ENCODE measurements at regions of chr1 and their contacts with region 1.

Region 1: DNA sequence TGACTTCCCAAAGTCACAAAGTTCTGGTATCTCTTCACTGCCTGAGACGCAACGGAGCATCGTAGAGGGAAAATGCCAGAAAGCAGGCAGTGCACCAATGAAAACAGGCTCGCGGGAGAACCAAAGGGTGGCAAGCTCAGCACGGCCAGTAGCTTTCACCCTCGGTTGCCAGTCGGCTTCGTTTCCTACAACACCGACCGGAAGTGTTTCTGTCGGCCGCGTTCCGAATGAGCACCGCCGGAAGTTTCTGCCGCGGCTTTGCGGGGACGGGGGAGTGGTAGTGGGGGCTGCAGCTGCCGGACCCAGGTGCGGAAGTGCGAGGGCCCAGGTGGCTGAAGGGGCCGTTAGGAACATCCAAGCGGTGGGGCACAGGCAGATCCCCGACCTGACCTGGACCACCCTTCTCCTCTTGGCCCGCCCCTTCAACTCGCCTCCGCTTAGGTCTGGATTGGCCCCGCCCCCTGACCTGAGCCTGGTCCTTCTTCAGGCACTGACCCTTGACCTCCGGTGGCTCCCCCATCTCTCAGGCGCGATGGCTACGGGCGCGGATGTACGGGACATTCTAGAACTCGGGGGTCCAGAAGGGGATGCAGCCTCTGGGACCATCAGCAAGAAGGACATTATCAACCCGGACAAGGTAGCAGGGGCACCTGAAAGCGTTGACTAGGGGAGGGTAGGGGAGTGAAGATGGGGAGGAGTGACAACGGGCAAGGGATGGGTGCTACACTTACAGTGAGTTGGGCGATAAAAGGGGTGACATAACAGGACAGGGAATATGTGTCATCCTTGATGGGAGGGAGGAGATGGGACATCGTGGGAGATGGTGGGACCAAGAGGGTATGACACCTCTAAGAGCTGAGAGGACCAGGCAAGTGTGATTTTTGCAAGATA is at the start of gene DMAP1:
- DNase-seq: peak; percentile 37
- H3K4me3 ChIP-seq: peak within 1 kb of the TSS; percentile 98
- CTCF ChIP-seq: no peak

Region 2: GRCh38 chr1:44002606-44003157 is 210.8 kb before region 1 on chr1:
- CTCF ChIA-PET with region 1: interaction called, 29 read pairs
- POLR2A ChIA-PET with region 1: no interaction called
- DNase-seq: no peak
- H3K4me3 ChIP-seq: no peak overlapping the region
- CTCF ChIP-seq: no peak

Region 3: DNA sequence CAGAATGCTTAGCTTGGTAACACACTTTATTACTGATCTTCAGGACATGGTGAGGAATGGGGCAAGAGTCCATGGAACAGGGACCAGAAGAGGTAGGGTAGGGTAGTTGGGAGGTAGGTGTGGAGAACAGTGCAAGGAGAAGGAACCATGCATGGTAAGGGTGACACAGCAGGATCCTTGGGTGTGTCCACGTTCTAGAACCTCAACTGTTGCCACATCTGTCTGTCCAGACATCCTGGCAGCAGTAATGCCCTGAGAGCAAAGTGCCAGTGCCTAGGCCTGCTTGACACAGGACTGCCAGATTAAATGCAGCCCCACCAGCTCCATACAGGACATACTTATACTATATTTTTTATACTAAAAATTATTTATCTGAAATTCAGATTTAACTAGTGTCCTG is 13.7 kb after region 1 on chr1:
- CTCF ChIA-PET with region 1: interaction called, 167 read pairs
- POLR2A ChIA-PET with region 1: no interaction called
- DNase-seq: no peak
- H3K4me3 ChIP-seq: no peak overlapping the region
- CTCF ChIP-seq: no peak

Region 4: GRCh38 chr1:44270686-44271628 is 57.5 kb after region 1 on chr1:
- CTCF ChIA-PET with region 1: interaction called, 16 read pairs
- POLR2A ChIA-PET with region 1: no interaction called
- DNase-seq: no peak
- H3K4me3 ChIP-seq: no peak overlapping the region
- CTCF ChIP-seq: no peak

Region 5: GRCh38 chr1:44294588-44295007 is 81.1 kb after region 1 on chr1:
- CTCF ChIA-PET with region 1: interaction called, 101 read pairs
- POLR2A ChIA-PET with region 1: no interaction called
- DNase-seq: peak; percentile 38
- H3K4me3 ChIP-seq: no peak overlapping the region
- CTCF ChIP-seq: peak; percentile 51

Region 6: DNA sequence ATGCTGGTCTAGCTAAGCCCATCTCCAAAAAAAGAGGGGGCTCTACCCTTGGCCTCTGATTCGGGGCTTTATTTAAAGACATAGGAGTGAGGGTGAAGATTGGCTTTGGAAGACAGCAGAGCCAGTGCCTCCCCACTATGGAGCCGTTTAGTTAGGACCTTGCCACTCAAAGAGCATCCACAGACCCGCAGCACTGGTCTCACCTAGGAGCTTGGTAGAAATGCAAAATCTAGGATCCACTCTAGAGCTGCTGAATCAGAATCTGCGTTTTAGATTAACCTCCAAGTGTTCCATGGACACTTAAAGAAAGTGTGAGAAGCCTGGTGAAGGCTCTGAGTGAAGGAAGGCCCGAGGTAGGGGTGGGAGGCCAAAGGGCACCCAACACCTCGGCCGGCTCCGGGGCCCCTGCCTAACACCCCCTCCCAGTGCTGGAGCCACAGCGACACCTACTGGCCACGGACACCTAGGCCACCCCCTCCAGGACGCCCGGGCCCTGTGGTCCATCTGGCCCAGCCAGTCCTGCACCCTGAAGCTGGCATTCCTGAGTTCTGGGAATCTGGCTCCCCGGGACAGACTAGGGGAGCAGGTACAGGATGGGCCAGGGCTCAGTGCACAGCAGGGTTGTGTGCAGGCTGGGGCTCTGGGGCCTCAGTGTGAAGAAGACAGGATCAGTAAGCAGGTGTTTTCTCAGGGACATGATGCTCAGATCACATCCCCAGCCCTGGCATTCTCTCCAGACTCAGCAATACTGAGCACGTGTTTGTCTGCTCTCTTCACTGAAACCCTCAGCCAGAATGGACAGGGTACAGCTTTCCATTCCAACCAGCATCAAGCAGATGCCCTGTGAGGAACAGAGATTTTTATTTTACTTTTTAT is 381.6 kb after region 1 on chr1:
- CTCF ChIA-PET with region 1: interaction called, 87 read pairs
- POLR2A ChIA-PET with region 1: no interaction called
- DNase-seq: no peak
- H3K4me3 ChIP-seq: no peak overlapping the region
- CTCF ChIP-seq: peak; percentile 99

Measured in AG04449 (cell line).